ENCODE measurements at regions of chr3 and their contacts with region 1.

Region 1: GRCh38 chr3:172673210-172673679 is 37.6 kb downstream of the NCEH1 start:
- H3K4me3 ChIP-seq: no peak overlapping the region
- H3K27ac ChIP-seq: no peak overlapping the region
- H3K4me1 ChIP-seq: no peaks in the 10 kb centered on the region
- CTCF ChIP-seq: no peak; the same call in 1 of the 2 replicates

Region 2: GRCh38 chr3:172658344-172659245 is 14.7 kb before region 1 on chr3:
- CTCF ChIA-PET with region 1: interaction called, 11 read pairs
- POLR2A ChIA-PET with region 1: no interaction called
- H3K4me3 ChIP-seq: no peak overlapping the region
- H3K27ac ChIP-seq: no peak overlapping the region
- H3K4me1 ChIP-seq: no peaks in the 10 kb centered on the region
- CTCF ChIP-seq: no peak

Region 3: GRCh38 chr3:172698631-172699030 is 25.4 kb after region 1 on chr3:
- CTCF ChIA-PET with region 1: interaction called, 16 read pairs
- POLR2A ChIA-PET with region 1: no interaction called
- H3K4me3 ChIP-seq: no peak overlapping the region
- H3K27ac ChIP-seq: no peak overlapping the region
- H3K4me1 ChIP-seq: no peaks in the 10 kb centered on the region
- CTCF ChIP-seq: no peak

Region 4: GRCh38 chr3:172750368-172751174 is 77.3 kb after region 1 on chr3 and contains the start of gene ECT2:
- CTCF ChIA-PET with region 1: interaction called, 13 read pairs
- POLR2A ChIA-PET with region 1: interaction called, 5 read pairs
- H3K4me3 ChIP-seq: peak within 1 kb of the TSS; percentile 99
- H3K27ac ChIP-seq: peak within 1 kb of the TSS; percentile 77
- H3K4me1 ChIP-seq: no peaks in the 10 kb centered on the region
- CTCF ChIP-seq: peak; percentile 58; the same call in 1 of the 2 replicates

Region 5: GRCh38 chr3:172766241-172766640 is 93.0 kb after region 1 on chr3:
- CTCF ChIA-PET with region 1: no interaction called
- POLR2A ChIA-PET with region 1: no interaction called
- H3K4me3 ChIP-seq: no peak overlapping the region
- H3K27ac ChIP-seq: no peak overlapping the region
- H3K4me1 ChIP-seq: no peaks in the 10 kb centered on the region
- CTCF ChIP-seq: no peak

Region 6: DNA sequence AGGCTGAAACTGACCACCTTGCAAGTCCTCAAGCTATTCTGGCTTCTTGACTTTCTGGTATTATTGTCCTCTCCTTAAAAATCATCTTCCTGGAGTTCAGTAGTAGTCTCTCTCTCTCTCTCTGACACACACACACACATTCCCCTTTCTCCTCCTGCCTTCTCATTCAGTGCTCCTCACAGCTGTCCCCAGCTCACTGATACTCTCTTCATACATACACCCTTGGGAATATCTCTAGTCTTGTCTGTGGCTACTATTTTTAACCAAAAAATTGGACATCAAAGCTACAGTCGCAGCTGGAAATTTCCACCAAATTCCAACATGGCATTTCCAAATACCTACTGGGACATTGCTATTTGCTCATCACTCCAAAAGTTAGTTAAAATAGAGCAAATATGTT is 256.2 kb after region 1 on chr3:
- CTCF ChIA-PET with region 1: no interaction called
- POLR2A ChIA-PET with region 1: no interaction called
- H3K4me3 ChIP-seq: no peak overlapping the region
- H3K27ac ChIP-seq: no peak overlapping the region
- H3K4me1 ChIP-seq: no peaks in the 10 kb centered on the region
- CTCF ChIP-seq: no peak